ENCODE measurements at regions of chr7 and their contacts with region 1.

Region 1: GRCh38 chr7:93890464-93891068 is at the start of gene TFPI2:
- DNase-seq: peak; percentile 87
- ATAC-seq: peak; percentile 73
- H3K4me3 ChIP-seq: peak within 1 kb of the TSS; percentile 83
- H3K27ac ChIP-seq: peak within 1 kb of the TSS; percentile 90
- H3K4me1 ChIP-seq: peaks cover 15% of the 10 kb centered on the region
- H3K27me3 ChIP-seq: no peaks in the 10 kb centered on the region
- CTCF ChIP-seq: peak; percentile 38; the same call in 1 of the 2 replicates
- total RNA-seq, gene TFPI2: 53.1 and 62.6 TPM in 2 replicates

Region 2: DNA sequence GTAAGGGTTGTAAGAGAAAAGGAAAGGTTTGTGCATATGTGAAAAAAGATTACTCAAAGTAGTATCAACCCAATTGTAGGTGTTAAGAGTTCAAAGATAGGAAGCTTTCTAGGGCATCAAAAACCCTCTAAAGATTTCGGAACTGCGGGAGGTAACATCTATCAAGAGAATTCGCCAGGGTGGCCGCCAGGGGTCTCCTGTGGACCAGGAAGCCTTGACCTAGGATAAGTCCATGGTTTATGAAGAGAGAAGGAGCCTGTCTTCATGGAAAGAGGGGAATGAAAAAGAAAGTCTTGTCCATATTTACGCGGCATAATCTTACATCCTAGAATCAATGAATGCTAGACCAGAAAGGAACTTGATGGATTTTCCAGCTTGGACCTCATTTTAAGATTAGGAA is 175.3 kb before region 1 on chr7:
- CTCF ChIA-PET with region 1: no interaction called
- POLR2A ChIA-PET with region 1: no interaction called
- intact Hi-C with region 1: loop called (anchors 1 kb)
- DNase-seq: peak; percentile 47
- ATAC-seq: peak; percentile 87
- H3K4me3 ChIP-seq: no peak overlapping the region
- H3K27ac ChIP-seq: no peak overlapping the region
- H3K4me1 ChIP-seq: no peaks in the 10 kb centered on the region
- H3K27me3 ChIP-seq: peaks cover 37% of the 10 kb centered on the region
- CTCF ChIP-seq: peak; percentile 71

Region 3: GRCh38 chr7:93910076-93910994 is 19.8 kb after region 1 on chr7:
- CTCF ChIA-PET with region 1: interaction called, 4 read pairs
- POLR2A ChIA-PET with region 1: interaction called, 3 read pairs
- intact Hi-C with region 1: loop called (anchors 2 kb)
- DNase-seq: peak; percentile 31
- ATAC-seq: peak; percentile 53
- H3K4me3 ChIP-seq: no peak overlapping the region
- H3K27ac ChIP-seq: no peak overlapping the region
- H3K4me1 ChIP-seq: peaks cover 13% of the 10 kb centered on the region
- H3K27me3 ChIP-seq: peaks cover 4% of the 10 kb centered on the region; the same call in 1 of the 2 replicates
- CTCF ChIP-seq: no peak

Region 4: DNA sequence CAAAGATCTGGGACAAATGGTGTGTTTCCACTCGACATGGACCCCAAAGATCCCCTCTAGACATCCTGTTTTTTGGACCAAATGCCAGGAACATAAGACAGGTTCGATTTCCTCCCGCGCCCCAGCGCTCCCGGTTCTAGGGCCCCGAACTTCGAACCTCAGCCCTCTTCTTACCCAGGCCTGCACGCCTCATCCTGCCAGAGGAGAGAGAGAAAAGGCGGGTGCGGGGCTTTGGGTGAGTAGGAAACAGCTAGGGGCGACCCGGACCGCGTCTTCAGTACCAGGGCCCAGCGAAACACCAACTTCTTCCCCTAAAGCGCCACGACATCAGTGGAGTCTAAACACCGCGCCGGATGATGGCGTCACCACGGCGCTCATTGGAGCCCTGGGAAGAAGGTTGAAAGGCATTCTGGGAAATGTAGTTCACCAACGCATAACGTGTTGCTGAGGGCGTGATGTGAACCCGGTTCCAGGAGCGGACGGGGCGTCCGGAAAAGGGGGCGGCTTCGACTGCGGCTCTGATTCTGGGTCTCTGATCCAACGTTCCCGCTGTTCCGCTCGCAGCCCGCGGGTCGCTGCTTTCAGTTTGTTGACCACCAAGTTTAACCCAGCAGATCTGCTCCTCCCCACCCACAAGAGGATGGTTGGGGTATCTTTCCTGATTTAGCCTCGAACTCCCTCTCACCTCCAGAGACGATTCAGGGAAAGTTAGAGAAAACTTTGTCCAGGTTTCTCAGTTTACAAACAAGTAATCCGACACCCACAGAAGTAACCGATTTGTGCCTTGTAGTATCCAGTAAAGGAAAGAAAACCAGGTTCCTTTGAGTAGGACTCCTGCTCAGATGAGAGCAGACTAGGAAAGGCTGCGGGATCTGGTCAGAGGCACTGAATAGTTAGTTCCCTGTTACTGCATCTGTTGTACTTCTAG is 113.7 kb after region 1 on chr7 and contains the start of gene BET1:
- CTCF ChIA-PET with region 1: no interaction called
- POLR2A ChIA-PET with region 1: no interaction called
- intact Hi-C with region 1: loop called (anchors 1 kb)
- DNase-seq: peak; percentile 97
- ATAC-seq: peak; percentile 92
- H3K4me3 ChIP-seq: peak within 1 kb of the TSS; percentile 99
- H3K27ac ChIP-seq: peak within 1 kb of the TSS; percentile 64
- H3K4me1 ChIP-seq: peaks cover 19% of the 10 kb centered on the region
- H3K27me3 ChIP-seq: no peaks in the 10 kb centered on the region
- CTCF ChIP-seq: no peak
- total RNA-seq, gene BET1: 7.9 and 12.1 TPM in 2 replicates

Region 5: DNA sequence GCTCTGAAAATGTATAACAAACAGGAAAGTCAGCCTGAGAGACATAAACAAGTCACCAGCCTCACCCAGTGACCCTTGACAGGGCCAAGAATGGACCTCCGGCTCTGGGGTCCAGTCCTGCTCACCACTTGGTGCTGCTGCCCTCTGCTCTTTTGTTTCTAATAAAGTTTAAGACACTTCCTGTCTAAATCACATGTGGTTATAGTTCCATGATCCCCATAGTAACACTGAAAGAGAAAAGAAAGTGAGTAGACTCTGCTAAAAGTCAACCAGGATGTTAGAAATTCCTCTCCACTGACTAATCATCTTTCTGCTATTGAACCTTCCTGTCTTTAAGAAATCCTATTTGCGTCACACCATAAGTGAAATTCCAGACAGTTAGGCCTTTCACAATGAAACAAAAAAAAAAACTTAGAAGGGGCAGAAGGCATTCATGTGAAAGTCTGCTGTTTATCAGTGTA is 292.8 kb after region 1 on chr7:
- CTCF ChIA-PET with region 1: no interaction called
- POLR2A ChIA-PET with region 1: no interaction called
- intact Hi-C with region 1: loop called (anchors 1 kb)
- DNase-seq: peak; percentile 95
- ATAC-seq: peak; percentile 88
- H3K4me3 ChIP-seq: peak overlapping the region; percentile 29; the same call in 1 of the 2 replicates
- H3K27ac ChIP-seq: peak overlapping the region; percentile 97
- H3K4me1 ChIP-seq: peaks cover 24% of the 10 kb centered on the region
- H3K27me3 ChIP-seq: no peaks in the 10 kb centered on the region
- CTCF ChIP-seq: no peak

Measured in PC-3 (cell line).